Pancreas (tissue), 10 donors: ENCODE measurements at regions of chr17 and their contacts with region 1.

Region 1: DNA sequence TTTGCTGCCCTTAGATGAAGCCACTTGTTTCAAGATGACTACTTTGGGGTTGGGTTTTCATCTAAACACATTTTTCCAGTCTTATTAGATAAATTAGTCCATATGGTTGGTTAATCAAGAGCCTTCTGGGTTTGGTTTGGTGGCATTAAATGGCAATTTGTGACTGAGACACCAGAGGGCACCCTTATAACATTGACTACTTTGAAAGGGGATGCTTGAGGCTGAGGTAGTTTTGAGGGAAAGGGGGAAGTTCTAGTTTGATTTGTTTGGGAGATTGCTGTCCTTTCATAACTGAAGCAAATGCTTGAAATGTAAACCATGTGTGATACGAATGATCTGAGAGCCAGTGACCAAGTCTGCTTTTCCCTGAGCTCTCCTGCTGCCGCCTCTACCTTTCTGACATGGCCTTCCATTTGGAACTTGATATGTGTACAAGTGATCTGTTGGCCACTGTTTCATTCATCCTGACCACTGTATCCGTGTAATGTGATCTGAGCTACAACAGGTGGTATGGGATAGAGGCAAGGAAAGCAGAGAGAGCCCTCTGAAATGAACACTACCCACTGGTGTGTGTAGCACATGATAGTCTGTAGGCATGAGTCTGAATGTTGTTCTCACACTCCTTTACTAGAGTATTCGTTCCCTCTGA is 5.8 kb upstream of the RARA start:
- DNase-seq: peak in 1 of 6 donors; percentile 69
- ATAC-seq: peak; percentile 68 to 86 (median 82)
- H3K4me3 ChIP-seq: no peak overlapping the region
- H3K27ac ChIP-seq: no peak overlapping the region
- H3K4me1 ChIP-seq: peaks cover 0 to 4% (median 0%) of the 10 kb centered on the region in 3 donors
- H3K27me3 ChIP-seq: no peaks in the 10 kb centered on the region
- CTCF ChIP-seq: peak; percentile 24 to 53 (median 38)

Region 2: DNA sequence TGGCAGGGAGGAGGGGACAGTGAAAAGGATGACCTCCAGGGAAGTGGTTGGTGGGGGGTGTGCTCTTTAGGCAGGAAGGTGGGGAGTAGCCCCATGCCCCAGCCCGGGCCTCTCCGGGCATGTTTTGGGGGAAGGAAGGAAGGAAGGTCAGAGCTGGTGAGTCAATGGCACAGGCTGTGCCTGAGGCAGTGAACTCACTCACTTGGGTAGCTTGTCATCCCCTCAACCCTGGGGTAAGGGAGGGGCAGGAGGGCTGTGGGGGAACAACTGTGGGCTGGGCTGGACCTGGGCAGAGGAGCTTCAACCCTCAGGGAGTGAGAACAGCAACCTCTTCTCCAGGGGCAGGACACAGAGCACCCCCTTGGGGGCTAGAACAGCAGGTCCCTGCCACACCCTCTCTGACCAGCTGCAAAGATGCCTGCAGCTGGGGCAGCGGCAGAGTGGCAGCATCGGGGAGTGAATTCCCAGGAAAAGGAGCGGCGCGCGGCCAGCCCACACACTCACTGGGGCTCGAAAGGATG is 281.6 kb before region 1 on chr17:
- intact Hi-C with region 1: no loop called
- DNase-seq: no peak
- ATAC-seq: no peak
- H3K4me3 ChIP-seq: no peak overlapping the region
- H3K27ac ChIP-seq: no peak overlapping the region
- H3K4me1 ChIP-seq: peaks cover 0 to 12% (median 7%) of the 10 kb centered on the region in 3 donors
- H3K27me3 ChIP-seq: no peaks in the 10 kb centered on the region
- CTCF ChIP-seq: no peak

Region 3: GRCh38 chr17:40230670-40231069 is 72.5 kb before region 1 on chr17:
- intact Hi-C with region 1: no loop called
- DNase-seq: no peak
- ATAC-seq: no peak
- H3K4me3 ChIP-seq: no peak overlapping the region
- H3K27ac ChIP-seq: no peak overlapping the region
- H3K4me1 ChIP-seq: no peaks in the 10 kb centered on the region
- H3K27me3 ChIP-seq: no peaks in the 10 kb centered on the region
- CTCF ChIP-seq: no peak

Region 4: GRCh38 chr17:40345161-40345993 is 42.2 kb after region 1 on chr17:
- intact Hi-C with region 1: loop called in 2 of 3 experiments (anchors 5 kb)
- DNase-seq: peak; percentile 78 to 91 (median 84)
- ATAC-seq: peak; percentile 42 to 68 (median 56)
- H3K4me3 ChIP-seq: peak overlapping the region; percentile 20 to 73 (median 38)
- H3K27ac ChIP-seq: peak overlapping the region; percentile 12 to 82 (median 68)
- H3K4me1 ChIP-seq: peaks cover 22 to 61% (median 26%) of the 10 kb centered on the region in 3 donors
- H3K27me3 ChIP-seq: no peaks in the 10 kb centered on the region
- CTCF ChIP-seq: no peak

Region 5: GRCh38 chr17:40355123-40355803 is 52.1 kb after region 1 on chr17:
- intact Hi-C with region 1: loop called (anchors 2 to 5 kb)
- DNase-seq: peak; percentile 49 to 95 (median 80)
- ATAC-seq: peak; percentile 62 to 78 (median 76)
- H3K4me3 ChIP-seq: no peak overlapping the region
- H3K27ac ChIP-seq: no peak overlapping the region
- H3K4me1 ChIP-seq: peaks cover 0 to 3% (median 0%) of the 10 kb centered on the region in 3 donors
- H3K27me3 ChIP-seq: no peaks in the 10 kb centered on the region
- CTCF ChIP-seq: peak; percentile 93 to 96 (median 94)

Region 6: DNA sequence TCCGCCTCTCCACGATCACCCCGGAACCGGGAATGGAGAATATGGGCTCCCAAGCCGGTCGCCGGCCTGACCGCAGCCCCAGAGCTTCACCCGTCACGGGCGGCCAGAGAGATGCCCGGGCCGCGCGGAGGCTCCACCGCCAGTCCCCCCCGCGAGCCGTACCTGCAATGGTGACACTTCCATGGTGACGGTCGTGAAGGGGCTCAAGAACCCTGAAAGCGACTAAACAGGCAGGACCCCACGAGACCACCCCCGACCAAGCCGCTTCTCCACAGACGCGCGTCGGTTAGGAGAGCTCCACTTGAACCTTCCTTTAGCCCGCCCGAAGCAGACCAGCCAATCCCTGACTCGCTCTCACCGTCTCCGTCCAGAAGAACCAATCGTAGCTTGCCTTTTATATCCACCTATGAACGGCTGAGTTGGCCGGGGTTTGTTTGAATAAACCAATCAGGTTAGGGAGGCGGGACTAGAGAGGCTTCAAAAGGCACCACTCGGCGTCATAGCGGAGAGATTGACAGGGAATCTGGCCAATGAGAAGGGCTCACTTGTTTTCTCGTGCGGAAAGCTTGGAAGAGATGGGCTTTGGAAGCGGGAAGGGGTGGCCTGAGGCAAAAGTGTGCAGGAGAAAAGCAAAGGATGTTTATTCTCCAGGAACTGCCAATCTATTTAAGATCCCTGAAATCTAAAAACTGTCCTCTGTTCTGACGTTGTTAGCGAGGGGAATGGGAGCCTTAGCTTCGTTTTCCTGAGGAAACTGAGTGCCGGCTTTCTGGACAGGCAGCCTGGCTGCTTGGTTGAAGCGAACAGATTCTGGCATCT is 114.7 kb after region 1 on chr17 and contains the start of gene TOP2A:
- intact Hi-C with region 1: loop called in 2 of 3 experiments (anchors 10 kb)
- DNase-seq: peak; percentile 84 to 99 (median 95)
- ATAC-seq: peak; percentile 99
- H3K4me3 ChIP-seq: peak within 1 kb of the TSS; percentile 27 to 54 (median 39)
- H3K27ac ChIP-seq: peak within 1 kb of the TSS in 2 of 4 donors; percentile 13 to 33
- H3K4me1 ChIP-seq: peaks cover 0 to 11% (median 0%) of the 10 kb centered on the region in 3 donors
- H3K27me3 ChIP-seq: no peaks in the 10 kb centered on the region
- CTCF ChIP-seq: no peak
- total RNA-seq, gene TOP2A: 0.19 to 4.4 (median 1.2) TPM